Activated B cell treated with CpG ODN at 0.5 μM for 24 hours (primary cell): ENCODE measurements at regions of chr10 and their contacts with region 1.

Region 1: GRCh38 chr10:23067939-23068775 is 27.2 kb upstream of the MSRB2 start:
- DNase-seq: peak; percentile 41
- ATAC-seq: peak; percentile 58
- H3K4me3 Mint-ChIP-seq: no peak overlapping the region
- H3K27ac Mint-ChIP-seq: no peak overlapping the region
- H3K4me1 Mint-ChIP-seq: no peaks in the 10 kb centered on the region
- H3K27me3 Mint-ChIP-seq: peaks cover 10% of the 10 kb centered on the region
- CTCF ChIP-seq: no peak

Region 2: DNA sequence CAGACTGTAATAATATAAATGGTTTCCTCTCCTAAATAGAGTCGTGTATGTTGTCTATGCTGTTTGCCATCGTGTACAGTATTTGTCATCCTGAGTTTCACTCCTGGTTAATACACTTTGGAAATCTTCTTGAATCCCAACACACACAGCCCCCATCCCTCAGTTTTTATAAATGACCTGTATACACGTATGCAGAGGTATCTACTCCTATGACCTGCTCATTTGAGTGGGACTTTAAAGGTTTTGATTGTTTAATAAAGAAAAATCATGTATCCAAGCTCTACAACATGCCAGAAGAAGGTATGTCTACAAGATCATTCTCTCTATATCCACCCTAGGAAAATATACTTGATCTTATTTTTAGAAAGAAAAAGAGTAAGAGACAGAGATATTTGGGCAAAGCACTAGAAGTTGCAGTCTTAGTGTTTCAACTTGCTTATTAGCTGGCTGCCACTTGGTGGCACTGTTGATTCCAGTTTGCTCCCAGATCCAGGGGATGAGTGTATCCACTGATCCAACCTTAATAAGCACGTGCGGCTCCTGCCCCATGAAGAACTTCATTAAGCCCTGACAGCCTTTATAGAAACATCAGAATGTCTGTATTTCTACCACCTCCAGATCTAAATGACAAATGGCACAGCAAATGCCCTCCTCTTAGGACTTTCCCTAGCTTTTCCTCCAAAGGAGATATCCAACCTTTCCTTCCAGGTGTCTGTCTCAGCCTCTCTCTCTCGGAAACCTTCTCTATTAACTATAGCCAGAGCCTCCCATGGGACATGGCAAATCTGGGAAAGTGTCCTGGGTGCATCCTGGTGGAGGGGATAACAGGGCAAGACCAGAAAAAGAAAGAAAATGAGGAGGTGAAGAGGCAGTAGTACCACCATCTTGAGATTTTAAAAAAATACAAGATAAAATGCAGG is 1989.5 kb before region 1 on chr10:
- CTCF ChIA-PET with region 1: no interaction called
- POLR2A ChIA-PET with region 1: no interaction called
- intact Hi-C with region 1: loop called (anchors 2 kb)
- DNase-seq: no peak
- ATAC-seq: no peak
- H3K4me3 Mint-ChIP-seq: no peak overlapping the region
- H3K27ac Mint-ChIP-seq: no peak overlapping the region
- H3K4me1 Mint-ChIP-seq: no peaks in the 10 kb centered on the region
- H3K27me3 Mint-ChIP-seq: peaks cover 1% of the 10 kb centered on the region
- CTCF ChIP-seq: no peak

Region 3: DNA sequence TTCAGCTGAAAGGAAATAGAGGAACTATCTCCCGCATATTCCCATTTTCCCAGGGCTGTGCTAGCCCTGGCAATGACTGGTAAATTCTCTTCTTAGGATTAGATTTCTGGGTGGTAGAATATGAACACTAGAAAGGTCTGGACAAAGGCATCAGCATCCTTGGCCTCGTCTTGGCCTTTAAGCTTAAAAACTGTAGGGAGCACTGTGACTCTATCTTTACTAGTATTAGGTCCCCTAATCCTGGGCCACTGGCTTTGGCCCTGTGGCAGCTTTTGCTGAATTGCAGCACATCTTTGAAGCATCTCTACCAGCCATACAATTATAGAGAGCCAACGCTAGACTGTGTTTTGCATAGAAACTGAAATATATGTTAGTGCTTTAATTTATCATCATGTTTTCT is 808.9 kb before region 1 on chr10:
- CTCF ChIA-PET with region 1: no interaction called
- POLR2A ChIA-PET with region 1: no interaction called
- intact Hi-C with region 1: loop called (anchors 2 kb)
- DNase-seq: no peak
- ATAC-seq: peak; percentile 52
- H3K4me3 Mint-ChIP-seq: no peak overlapping the region
- H3K27ac Mint-ChIP-seq: no peak overlapping the region
- H3K4me1 Mint-ChIP-seq: peaks cover 3% of the 10 kb centered on the region
- H3K27me3 Mint-ChIP-seq: peaks cover 10% of the 10 kb centered on the region
- CTCF ChIP-seq: no peak

Region 4: GRCh38 chr10:22550732-22551131 is 517.4 kb before region 1 on chr10:
- CTCF ChIA-PET with region 1: no interaction called
- POLR2A ChIA-PET with region 1: no interaction called
- intact Hi-C with region 1: loop called (anchors 1 kb)
- DNase-seq: peak; percentile 50
- ATAC-seq: peak; percentile 64
- H3K4me3 Mint-ChIP-seq: no peak overlapping the region
- H3K27ac Mint-ChIP-seq: no peak overlapping the region
- H3K4me1 Mint-ChIP-seq: peaks cover 3% of the 10 kb centered on the region
- H3K27me3 Mint-ChIP-seq: no peaks in the 10 kb centered on the region
- CTCF ChIP-seq: no peak

Region 5: DNA sequence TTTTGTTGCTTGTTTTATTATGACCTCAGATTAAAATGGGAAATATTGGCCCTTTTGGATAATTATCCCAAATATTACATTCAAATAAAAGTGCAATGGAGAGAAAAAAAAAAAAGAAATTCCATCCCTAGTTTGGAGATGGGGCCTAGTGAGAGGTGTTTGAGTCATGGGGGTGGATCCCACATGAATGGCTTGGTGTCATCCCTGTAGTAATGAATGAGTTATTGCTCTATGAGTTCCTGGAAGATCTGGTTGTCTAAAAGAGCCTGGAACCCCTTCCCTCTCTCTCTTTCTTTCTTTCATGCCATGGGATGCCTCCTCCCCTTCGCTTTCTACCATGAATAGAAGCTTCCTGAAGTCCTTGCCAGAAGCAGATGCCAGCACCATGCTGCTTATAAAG is 71.5 kb after region 1 on chr10:
- CTCF ChIA-PET with region 1: no interaction called
- POLR2A ChIA-PET with region 1: no interaction called
- intact Hi-C with region 1: no loop called
- DNase-seq: no peak
- ATAC-seq: no peak
- H3K4me3 Mint-ChIP-seq: no peak overlapping the region
- H3K27ac Mint-ChIP-seq: no peak overlapping the region
- H3K4me1 Mint-ChIP-seq: no peaks in the 10 kb centered on the region
- H3K27me3 Mint-ChIP-seq: peaks cover 15% of the 10 kb centered on the region
- CTCF ChIP-seq: no peak